H1 (cell line): ENCODE measurements at regions of chr2 and their contacts with region 1.

Region 1: DNA sequence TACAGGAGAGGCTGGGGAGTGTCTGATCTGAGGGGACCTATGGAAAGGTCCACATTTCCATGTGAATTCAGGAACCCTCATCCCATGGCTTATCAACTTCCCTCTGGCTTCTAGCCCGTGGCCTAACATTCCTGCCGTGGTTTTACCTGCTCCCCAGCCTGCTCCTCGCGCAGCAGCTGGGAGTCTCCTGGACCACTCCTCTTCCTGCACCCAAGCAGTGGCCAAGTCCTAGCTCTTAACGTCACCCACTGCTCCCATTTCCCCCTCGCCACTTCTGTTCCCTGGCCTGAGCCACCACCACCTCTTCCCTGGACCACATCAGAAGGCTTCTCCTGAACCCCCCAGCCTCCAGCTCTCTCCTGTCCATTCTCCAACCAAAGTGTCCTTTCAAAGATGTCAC is 8.1 kb downstream of the FER1L5 start:
- DNase-seq: no peak
- H3K4me3 ChIP-seq: no peak overlapping the region
- H3K27ac ChIP-seq: no peak overlapping the region
- H3K4me1 ChIP-seq: no peaks in the 10 kb centered on the region
- H3K27me3 ChIP-seq: no peaks in the 10 kb centered on the region
- CTCF ChIP-seq: no peak
- EP300 ChIP-seq: no peak
- POLR2A ChIP-seq: no peak
- RAD21 ChIP-seq: no peak

Region 2: DNA sequence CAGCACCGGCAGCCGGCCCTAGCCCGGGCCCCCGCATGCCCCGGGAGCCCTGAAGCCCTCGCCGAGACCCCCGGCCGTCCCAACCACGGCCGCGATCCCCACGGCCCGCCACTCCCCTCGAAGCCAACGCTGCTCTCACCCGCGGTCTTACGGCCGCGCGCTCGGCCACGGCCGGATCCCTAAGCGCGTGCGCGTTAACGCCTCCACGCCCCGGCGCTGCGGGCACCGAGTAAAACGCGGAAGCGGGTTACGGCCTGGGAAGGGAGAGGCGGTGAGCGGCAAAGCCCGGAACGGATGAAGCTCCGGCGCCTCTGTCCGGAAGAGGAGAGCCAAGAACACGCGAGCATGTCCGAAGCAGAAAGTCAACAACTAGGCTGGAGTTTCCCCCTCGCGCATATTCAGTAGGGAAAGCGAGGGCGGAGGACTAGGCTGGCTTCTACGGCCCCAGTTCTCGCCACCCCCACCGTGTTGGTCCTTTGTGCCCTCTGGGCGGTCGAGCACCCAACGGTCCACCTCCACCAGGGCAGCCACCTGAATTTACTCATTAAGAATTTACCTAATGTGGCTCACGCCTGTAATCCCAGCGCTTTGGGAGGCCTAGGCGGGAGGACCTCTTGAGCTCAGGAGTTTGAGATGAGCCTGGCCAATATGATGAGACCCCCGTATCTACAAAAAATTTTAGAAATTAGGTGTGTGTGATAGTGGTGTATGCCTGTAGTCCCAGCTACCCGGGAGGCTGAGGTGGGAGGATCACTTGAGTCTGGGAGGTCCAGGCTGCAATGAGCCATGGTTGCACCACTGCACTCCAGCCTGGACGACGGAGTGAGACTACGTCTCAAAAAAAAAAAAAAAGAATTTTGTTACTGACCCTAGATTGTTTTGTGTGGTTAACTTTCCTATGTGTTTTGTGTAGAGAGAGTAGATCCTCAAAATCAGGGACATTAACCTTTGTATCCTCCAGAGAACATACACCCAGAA is 12.2 kb before region 1 on chr2 and contains the start of gene KANSL3:
- CTCF ChIA-PET with region 1: no interaction called
- POLR2A ChIA-PET with region 1: interaction called, 10 read pairs
- DNase-seq: peak; percentile 44 to 97
- H3K4me3 ChIP-seq: peak within 1 kb of the TSS; percentile 65 to 98 (median 86)
- H3K27ac ChIP-seq: no peak within 1 kb of the TSS; the same call in 1 of the 2 replicates
- H3K4me1 ChIP-seq: peaks cover 0 to 2% (median under 1%) of the 10 kb centered on the region in 4 experiments; a peak in 3 of 7 replicates
- H3K27me3 ChIP-seq: no peaks in the 10 kb centered on the region
- CTCF ChIP-seq: peak in 1 of 3 experiments; percentile 0; a peak in 1 of 4 replicates
- EP300 ChIP-seq: peak in 1 of 2 experiments; percentile 86; a peak in 1 of 3 replicates
- POLR2A ChIP-seq: peak in 1 of 2 experiments; percentile 84; a peak in 2 of 3 replicates
- RAD21 ChIP-seq: peak in 1 of 2 experiments; percentile 12; a peak in 2 of 4 replicates
- total RNA-seq, gene KANSL3: 31.4 and 32.6 TPM in 2 replicates